Activated naive CD4-positive, alpha-beta T cell treated with anti-CD3 and anti-CD28 coated beads for 36 hours (primary cell): ENCODE measurements at regions of chr11 and their contacts with region 1.

Region 1: DNA sequence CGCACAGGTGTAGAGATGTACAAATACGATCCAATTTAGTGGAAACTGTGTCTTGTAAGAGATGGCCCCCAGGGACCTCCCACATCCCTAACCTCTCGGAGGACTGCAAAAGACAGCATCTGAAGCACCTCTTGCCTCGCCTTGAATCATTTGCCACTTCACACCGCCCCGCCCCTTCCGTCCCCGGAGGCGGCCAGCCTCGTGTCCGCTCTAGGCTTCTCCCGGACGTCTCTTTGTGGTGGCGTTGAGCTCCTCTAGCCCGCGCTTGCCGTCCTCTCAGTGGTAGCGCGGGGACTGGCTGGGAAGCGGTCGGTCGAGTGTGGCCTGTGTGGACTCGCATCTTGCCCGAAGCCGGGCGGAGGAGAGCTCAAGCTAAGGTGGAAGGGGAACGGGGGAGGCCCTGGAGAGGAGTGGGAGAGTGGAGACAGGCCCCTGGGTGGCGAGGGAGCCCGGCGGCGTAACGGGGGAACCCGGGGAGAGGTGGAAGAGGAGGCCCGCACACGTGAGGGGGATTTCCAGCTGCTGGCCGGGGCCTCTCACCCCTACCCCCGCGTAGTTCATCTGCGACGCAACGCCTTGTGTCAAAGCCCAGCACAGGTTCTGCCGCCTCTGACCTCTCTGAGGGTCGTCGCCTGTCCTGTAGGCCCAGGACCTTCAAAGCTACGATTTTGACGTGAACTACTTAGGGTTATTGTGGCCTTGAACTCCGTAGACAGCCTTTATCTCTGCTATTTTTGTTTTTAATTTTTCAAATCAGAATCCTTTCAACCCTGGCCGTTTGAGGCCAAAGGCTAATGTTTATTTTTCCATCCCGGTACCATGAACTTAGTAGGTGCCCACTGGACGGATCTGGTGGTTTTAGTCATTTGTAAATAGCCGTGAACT is at the start of gene ARL14EP:
- DNase-seq: peak; percentile 92
- H3K4me3 Mint-ChIP-seq: peak within 1 kb of the TSS; percentile 99
- H3K27ac Mint-ChIP-seq: peak within 1 kb of the TSS; percentile 99
- H3K4me1 Mint-ChIP-seq: peaks cover 36% of the 10 kb centered on the region
- H3K27me3 Mint-ChIP-seq: peaks cover 3% of the 10 kb centered on the region
- total RNA-seq, gene ARL14EP: 17.9 to 22.1 TPM

Region 2: GRCh38 chr11:30282289-30282631 is 40.8 kb before region 1 on chr11:
- CTCF ChIA-PET with region 1: no interaction called
- intact Hi-C with region 1: loop called (anchors 1 kb)
- DNase-seq: peak; percentile 55
- H3K4me3 Mint-ChIP-seq: no peak overlapping the region
- H3K27ac Mint-ChIP-seq: no peak overlapping the region
- H3K4me1 Mint-ChIP-seq: peaks cover 14% of the 10 kb centered on the region
- H3K27me3 Mint-ChIP-seq: peaks cover 4% of the 10 kb centered on the region

Region 3: DNA sequence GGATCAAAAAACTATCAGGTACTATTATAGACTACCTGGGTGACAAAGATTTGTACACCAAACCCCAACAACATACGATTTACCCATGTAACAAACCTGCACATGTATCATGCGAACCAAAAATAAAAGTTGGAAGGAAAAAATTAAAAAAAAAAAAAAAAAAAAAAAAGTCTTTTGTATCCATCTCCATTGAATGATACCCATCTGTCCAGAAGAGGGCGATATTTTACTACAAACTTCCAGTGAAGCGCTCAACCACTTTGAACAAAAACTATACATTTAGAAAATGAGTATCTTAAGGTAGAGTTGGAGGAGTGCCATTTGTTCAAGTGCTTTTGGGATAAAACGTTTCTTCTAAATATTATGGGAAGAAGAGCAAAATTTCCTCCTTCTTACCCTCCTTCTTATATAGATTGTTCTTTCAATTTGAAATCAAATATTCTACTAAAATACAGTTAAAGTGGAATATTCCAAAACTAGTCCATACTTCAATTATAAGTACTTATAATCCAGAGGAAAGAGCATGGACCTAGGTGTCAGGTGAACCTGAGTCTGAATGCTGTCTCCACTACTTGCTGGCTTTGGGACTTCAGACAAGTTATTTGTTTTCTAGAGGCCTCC is 23.1 kb after region 1 on chr11:
- CTCF ChIA-PET with region 1: interaction called, 4 read pairs
- intact Hi-C with region 1: loop called (anchors 2 kb)
- DNase-seq: no peak
- H3K4me3 Mint-ChIP-seq: no peak overlapping the region
- H3K27ac Mint-ChIP-seq: no peak overlapping the region
- H3K4me1 Mint-ChIP-seq: peaks cover 11% of the 10 kb centered on the region
- H3K27me3 Mint-ChIP-seq: peaks cover 3% of the 10 kb centered on the region

Region 4: GRCh38 chr11:31369348-31370329 is 1046.6 kb after region 1 on chr11 and contains the starts of genes DCDC1 and DNAJC24:
- CTCF ChIA-PET with region 1: no interaction called
- intact Hi-C with region 1: loop called (anchors 1 kb)
- DNase-seq: peak; percentile 95
- H3K4me3 Mint-ChIP-seq: peak within 1 kb of the TSS; percentile 99
- H3K27ac Mint-ChIP-seq: peak within 1 kb of the TSS; percentile 91
- H3K4me1 Mint-ChIP-seq: peaks cover 55% of the 10 kb centered on the region
- H3K27me3 Mint-ChIP-seq: no peaks in the 10 kb centered on the region
- total RNA-seq, gene DCDC1: 0.25 TPM in 1 of 2 experiments, not detected in the other
- total RNA-seq, gene DNAJC24: 14.2 to 14.6 TPM

Region 5: DNA sequence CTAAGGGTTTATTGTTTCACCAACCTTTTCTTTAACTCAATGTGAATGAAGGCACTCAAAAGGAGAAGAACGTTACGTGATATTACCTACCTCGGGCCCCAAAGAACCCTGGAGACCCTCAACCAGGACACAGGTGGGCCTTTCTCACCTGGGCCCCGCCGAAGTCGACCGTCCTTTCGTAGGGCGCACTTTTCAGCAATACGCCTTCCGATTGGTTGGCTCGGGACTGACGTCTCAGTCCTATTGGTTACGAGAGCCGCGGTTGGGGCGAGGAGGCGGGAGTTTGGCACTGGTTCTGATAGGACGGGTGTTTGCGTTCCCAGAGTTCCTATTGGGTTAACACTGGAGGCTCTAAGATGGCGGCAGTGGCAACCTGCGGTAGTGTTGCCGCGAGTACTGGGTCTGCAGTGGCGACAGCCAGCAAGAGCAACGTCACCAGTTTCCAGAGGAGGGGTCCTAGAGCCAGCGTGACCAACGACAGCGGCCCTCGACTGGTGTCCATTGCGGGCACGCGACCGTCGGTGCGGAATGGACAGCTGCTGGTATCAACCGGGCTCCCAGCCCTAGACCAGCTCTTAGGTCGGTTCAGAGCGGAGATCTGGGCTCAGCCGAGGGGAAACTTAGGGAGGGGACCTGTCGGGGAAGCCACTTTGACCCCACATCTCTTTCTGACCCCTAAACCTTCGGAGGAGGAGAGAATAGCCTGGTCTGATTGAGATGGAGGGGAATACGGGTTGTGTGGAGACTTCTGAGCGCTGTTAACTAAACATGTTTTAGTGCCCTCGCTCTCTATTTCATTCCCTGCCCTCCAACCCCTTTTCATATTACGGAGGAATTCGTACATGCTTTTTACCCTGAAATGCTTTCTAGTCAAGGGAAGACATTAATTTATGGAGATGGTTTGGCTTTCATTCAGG is 1186.6 kb after region 1 on chr11 and contains the starts of genes ELP4 and IMMP1L:
- CTCF ChIA-PET with region 1: no interaction called
- intact Hi-C with region 1: loop called (anchors 10 kb)
- DNase-seq: peak; percentile 98
- H3K4me3 Mint-ChIP-seq: peak within 1 kb of the TSS; percentile 99
- H3K27ac Mint-ChIP-seq: peak within 1 kb of the TSS; percentile 90
- H3K4me1 Mint-ChIP-seq: peaks cover 36% of the 10 kb centered on the region
- H3K27me3 Mint-ChIP-seq: no peaks in the 10 kb centered on the region
- total RNA-seq, gene ELP4: 20.8 to 23.8 TPM
- total RNA-seq, gene IMMP1L: 15.6 to 15.9 TPM

Region 6: DNA sequence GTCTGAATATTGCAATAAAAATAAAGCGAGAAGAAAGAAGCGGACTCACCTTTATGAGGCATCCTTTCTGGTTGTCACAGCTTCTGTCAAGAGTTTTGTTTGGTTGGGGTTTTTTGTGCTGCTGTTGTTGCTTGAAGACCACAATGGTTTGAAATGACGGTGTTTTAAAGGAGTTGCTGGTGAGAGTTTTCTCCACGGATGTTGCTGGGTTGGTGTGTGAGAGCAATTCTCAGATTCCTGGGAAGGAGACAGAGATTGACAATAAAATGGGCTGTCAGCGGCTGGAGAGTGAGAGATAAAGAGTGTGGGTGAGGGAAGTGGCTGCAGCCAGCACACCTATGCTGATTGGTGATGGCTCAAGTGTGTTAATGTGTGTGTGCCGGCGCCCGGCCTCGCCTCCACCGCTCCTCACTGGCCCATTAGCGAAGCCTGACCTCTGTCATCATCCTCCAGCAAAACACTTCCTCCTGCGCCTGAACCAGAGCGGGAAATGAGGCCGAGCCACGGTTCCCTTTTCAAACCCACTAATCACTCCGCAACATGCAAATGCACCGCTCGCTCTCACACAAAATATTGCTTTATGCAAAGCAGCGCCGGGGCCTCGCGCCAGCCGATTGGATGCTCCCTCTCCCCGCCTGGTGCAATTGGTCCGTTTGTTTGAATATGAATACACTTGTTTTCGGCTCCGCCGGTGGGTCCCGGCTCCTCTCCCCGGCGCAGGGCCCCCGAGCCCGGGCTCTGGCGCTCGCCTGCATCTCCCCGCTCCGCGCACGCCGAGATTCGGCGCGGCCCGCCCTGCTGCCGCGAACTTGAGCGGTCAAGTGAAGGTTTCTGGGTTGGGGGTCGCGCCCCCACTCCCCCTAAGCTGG is 1487.9 kb after region 1 on chr11 and contains the start of gene PAX6:
- CTCF ChIA-PET with region 1: no interaction called
- intact Hi-C with region 1: loop called (anchors 10 kb)
- DNase-seq: peak; percentile 82
- H3K4me3 Mint-ChIP-seq: peak within 1 kb of the TSS; percentile 73
- H3K27ac Mint-ChIP-seq: no peak within 1 kb of the TSS
- H3K4me1 Mint-ChIP-seq: peaks cover 47% of the 10 kb centered on the region
- H3K27me3 Mint-ChIP-seq: peaks cover 76% of the 10 kb centered on the region
- total RNA-seq, gene PAX6: 1.5 TPM

Region 7: GRCh38 chr11:32090545-32091373 is 1767.7 kb after region 1 on chr11 and contains the start of gene RCN1:
- CTCF ChIA-PET with region 1: no interaction called
- intact Hi-C with region 1: loop called (anchors 5 kb)
- DNase-seq: peak; percentile 43
- H3K4me3 Mint-ChIP-seq: peak within 1 kb of the TSS; percentile 79
- H3K27ac Mint-ChIP-seq: peak within 1 kb of the TSS; percentile 86
- H3K4me1 Mint-ChIP-seq: peaks cover 39% of the 10 kb centered on the region
- H3K27me3 Mint-ChIP-seq: peaks cover 4% of the 10 kb centered on the region
- total RNA-seq, gene RCN1: 24.8 to 29.6 TPM